ENCODE measurements at regions of chr13 and their contacts with region 1.

Region 1: GRCh38 chr13:110108347-110109174 is 198.4 kb downstream of the COL4A1 start:
- DNase-seq: peak; percentile 59
- H3K4me3 ChIP-seq: no peak overlapping the region
- H3K27ac ChIP-seq: peak overlapping the region in 3 of 4 donors; percentile 53 to 72 (median 56)
- H3K4me1 ChIP-seq: peaks cover 0 to 14% (median 5%) of the 10 kb centered on the region in 4 donors
- H3K27me3 ChIP-seq: no peaks in the 10 kb centered on the region
- CTCF ChIP-seq: peak; percentile 37 to 54 (median 41)
- EP300 ChIP-seq: no peak
- POLR2A ChIP-seq: no peak

Region 2: DNA sequence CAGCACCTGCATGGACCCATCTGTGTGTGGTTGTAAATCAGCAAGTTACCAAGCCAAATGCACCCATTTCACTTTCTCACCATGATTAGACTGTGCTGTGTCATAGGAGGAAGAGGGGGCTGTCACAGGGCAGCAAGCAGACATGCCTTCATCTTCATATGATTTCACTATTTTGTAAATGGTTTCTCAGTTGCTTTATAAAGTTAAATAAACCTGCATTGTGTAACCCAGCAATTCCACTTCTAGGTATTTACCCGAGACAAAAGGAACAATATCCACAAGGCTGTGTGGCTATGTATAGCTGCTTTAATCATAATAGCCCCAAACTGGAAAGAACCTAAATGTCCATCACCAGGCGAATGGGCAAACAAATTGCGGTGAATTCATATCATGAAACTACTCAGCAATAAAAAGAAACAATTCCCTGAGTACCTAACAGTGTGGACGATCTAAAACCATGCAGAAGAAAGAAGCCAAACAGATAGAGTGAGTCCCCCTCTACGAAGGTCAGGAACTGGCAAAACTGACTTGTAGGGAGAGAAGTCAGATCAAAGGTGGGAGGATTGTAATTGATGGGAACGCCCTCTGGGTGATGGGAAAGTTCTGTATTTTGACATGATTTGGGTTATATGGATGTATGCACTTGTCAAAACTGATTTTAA is 13.0 kb after region 1 on chr13:
- in situ Hi-C with region 1: no loop called
- intact Hi-C with region 1: loop called (anchors 1 kb)
- DNase-seq: no peak
- H3K4me3 ChIP-seq: no peak overlapping the region
- H3K27ac ChIP-seq: no peak overlapping the region
- H3K4me1 ChIP-seq: peaks cover 0 to 8% (median 2%) of the 10 kb centered on the region in 4 donors
- H3K27me3 ChIP-seq: peaks cover 29% of the 10 kb centered on the region
- CTCF ChIP-seq: no peak
- EP300 ChIP-seq: no peak
- POLR2A ChIP-seq: no peak

Region 3: DNA sequence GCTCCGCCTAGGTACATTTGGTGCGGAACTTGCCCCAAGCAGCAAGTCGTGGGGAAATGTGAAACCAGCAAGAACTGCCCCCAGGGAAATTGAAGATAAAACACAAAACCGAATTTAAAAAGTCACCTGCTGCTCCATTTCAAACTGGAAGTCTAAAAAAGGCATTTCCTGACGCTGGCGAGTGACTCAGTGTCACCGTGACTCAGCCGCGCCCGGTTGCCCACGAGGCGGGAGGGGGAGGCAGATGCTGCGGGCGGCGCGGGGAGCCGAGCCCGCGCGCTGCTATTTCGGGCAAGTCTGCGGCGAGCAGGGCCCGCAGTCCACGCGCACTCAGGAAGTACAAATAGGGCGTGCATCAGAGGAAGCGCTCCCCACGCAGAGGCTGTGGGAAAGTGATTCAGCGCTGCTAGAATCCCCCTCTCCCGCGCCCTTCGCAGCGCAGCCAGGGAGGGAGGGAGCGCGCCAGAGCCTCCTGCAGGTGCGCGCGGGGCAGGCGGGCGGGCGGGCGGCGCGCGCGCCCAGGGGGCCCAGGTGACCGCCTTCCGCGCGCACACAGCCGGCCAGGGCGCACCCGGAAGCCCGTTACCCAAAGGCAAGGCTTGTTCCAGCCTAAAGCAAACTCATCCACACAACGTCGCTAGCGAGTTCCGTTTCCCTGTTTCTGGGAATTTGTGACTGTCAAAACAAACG is 29.6 kb after region 1 on chr13:
- in situ Hi-C with region 1: no loop called
- intact Hi-C with region 1: no loop called
- DNase-seq: peak; percentile 49
- H3K4me3 ChIP-seq: peak overlapping the region; percentile 34 to 66 (median 51)
- H3K27ac ChIP-seq: peak overlapping the region in 3 of 4 donors; percentile 22 to 45 (median 40)
- H3K4me1 ChIP-seq: peaks cover 0 to 9% (median 0%) of the 10 kb centered on the region in 4 donors
- H3K27me3 ChIP-seq: no peaks in the 10 kb centered on the region
- CTCF ChIP-seq: peak in 1 of 5 experiments; percentile 1
- EP300 ChIP-seq: no peak
- POLR2A ChIP-seq: no peak